ENCODE measurements at regions of chr12 and their contacts with region 1.

Region 1: DNA sequence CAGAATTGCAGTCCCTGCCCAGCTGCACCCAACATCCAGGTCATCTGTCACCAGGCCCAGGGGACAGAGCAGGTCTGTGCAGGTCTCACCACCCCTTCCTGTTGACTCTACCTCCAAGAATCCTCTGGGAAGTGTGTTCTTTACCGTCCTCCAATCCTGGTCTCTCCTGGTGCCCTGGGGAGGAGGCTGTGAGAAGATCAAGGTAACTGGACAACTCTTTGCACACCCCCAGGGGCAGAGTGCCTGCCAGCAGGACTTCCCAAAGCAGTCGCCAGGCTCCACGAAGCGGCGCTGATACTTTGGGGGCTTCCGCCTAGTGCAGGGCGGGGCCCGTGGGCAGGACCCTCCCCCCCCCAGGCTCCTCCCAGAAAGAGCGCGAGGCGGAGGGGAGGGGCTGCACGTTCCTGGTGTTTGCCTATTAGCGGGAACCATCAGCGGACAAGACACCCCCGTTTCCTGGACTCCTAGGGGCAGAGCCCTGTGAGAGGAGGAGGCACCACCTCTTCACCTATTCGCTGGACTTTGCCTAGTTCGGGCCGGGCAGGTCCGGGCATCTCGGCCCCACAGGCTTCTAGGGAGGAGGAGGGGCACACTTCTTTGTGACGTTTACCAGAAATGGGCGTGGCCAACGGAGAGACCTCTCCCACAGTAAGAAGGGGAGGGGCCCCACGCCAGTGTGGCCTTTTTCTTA is 918.0 kb downstream of the AACS start:
- DNase-seq: peak; percentile 9
- H3K4me3 ChIP-seq: peak overlapping the region in 3 of 4 donors; percentile 18 to 39 (median 30)
- H3K27ac ChIP-seq: peak overlapping the region; percentile 2 to 24 (median 14)
- H3K4me1 ChIP-seq: no peaks in the 10 kb centered on the region
- H3K27me3 ChIP-seq: peaks cover 5% of the 10 kb centered on the region
- CTCF ChIP-seq: no peak
- EP300 ChIP-seq: no peak
- POLR2A ChIP-seq: no peak

Region 2: GRCh38 chr12:124713436-124714082 is 1269.7 kb before region 1 on chr12:
- in situ Hi-C with region 1: no loop called
- intact Hi-C with region 1: no loop called
- DNase-seq: no peak
- H3K4me3 ChIP-seq: peak overlapping the region in 1 of 4 donors; percentile 14
- H3K27ac ChIP-seq: peak overlapping the region; percentile 76 to 88 (median 81)
- H3K4me1 ChIP-seq: peaks cover 3 to 22% (median 9%) of the 10 kb centered on the region in 4 donors
- H3K27me3 ChIP-seq: no peaks in the 10 kb centered on the region
- CTCF ChIP-seq: no peak
- EP300 ChIP-seq: peak; percentile 90
- POLR2A ChIP-seq: no peak

Region 3: DNA sequence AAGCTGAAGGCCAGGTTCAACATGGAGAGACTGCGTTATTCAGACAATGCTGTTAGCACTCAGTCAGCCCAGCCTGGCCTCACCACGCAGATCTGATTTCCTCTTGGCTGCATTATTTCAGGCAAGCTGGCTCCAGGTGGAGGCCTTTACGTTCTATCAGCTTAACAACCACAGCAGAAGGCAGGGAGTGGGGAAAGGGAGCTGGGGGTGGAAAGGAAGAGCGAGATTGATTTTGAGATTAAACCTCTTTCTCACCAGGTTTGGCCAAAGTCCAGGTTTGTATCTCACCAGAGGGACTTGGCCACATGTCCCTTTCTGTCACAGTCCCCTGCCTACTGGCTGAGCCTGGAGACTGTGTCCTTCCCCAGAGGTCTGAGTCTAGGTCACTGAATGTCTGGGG is 1740.0 kb after region 1 on chr12:
- in situ Hi-C with region 1: no loop called
- intact Hi-C with region 1: loop called (anchors 5 kb)
- DNase-seq: no peak
- H3K4me3 ChIP-seq: no peak overlapping the region
- H3K27ac ChIP-seq: no peak overlapping the region
- H3K4me1 ChIP-seq: no peaks in the 10 kb centered on the region
- H3K27me3 ChIP-seq: no peaks in the 10 kb centered on the region
- CTCF ChIP-seq: no peak
- EP300 ChIP-seq: no peak
- POLR2A ChIP-seq: no peak